Left ventricle myocardium superior (tissue), 1 donor: ENCODE measurements at regions of chr3 and their contacts with region 1.

Region 1: DNA sequence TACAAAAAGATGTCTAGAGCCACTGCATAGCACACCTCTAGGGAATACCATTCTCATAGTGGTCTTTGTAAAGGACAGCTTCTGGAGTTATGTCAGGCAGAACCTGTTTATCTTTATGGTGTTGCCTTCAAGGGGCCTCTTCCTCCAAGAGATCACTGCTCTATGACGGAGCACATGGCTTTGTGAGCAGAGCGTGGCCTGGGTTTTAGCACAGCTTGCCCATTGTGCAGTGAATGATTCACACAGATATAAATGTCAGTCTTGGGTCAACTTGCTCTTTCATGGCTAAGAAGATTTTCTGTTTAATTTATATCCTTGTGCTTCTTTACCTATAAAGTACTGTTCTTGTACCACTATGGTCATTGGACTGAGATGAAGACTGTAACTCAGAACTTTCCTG is 41.5 kb upstream of the RBMS3 start:
- DNase-seq: no peak
- ATAC-seq: no peak

Region 2: GRCh38 chr3:28994161-28994905 is 245.0 kb before region 1 on chr3:
- intact Hi-C with region 1: no loop called
- DNase-seq: no peak
- ATAC-seq: no peak

Region 3: DNA sequence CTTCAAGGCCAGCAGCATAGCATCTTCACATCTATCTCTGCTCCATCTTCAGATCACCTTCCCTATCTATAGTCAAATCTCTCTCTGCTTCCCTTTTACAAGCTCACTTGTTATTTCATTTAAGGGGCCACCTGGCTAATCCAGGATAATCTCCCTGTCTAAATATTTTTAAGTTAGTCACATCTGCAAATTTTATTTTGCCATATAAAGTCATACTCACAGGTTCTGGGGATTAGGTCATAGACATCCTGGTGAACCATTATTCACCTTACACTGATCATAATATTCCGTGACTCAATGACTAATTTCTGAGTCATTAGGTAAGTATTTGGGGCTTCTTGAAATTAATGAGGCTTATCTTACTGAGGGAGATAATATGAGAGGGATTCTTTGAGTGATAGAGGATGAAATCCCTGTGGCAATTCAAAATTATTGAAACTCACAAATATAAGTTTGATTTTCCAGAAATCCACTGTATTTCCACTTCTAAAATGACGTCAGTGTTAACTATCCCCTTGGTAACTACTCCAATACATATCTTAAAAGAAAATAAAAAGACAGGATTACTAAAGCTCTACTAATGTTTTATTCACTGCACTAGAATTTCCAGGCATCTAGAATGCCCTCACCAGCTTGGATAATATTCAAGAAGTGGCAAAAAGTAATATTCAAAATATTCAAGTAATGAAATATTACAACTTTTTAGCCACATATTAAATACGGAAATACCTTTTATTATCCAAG is 52.2 kb before region 1 on chr3:
- intact Hi-C with region 1: loop called (anchors 10 kb)
- DNase-seq: no peak
- ATAC-seq: no peak

Region 4: DNA sequence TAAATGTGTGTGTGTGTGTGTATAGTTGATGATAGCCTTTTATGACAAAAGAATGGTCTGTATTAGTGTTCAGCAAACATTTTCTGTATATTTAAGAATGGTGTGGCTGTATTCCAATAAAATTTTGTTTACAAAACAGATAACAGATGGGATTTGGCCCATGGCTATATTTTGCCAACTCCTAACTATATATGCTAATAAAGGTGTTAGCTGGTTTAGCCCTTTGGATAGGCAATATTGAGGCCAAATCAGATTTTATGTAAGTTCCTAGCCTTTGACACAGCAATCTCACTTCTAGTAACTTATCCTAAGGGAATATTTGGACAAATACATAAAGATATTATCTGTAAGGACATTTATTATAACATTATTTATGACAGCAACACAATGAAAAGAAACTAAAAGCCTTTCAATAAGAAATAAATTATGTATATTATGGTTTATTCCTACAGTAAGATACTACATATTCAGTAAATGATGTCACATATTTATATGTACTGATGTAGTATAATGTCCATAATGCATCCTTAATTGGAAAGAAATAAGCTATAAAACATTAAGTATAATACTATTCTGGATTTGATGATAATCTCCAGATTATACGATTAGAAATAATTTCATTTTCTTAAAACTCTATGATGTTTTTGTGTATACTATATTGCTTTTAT is 305.5 kb after region 1 on chr3:
- intact Hi-C with region 1: no loop called
- DNase-seq: no peak
- ATAC-seq: no peak